Naive thymus-derived CD4-positive, alpha-beta T cell (primary cell): ENCODE measurements at regions of chr11 and their contacts with region 1.

Region 1: GRCh38 chr11:57456960-57457642 is 3.2 kb upstream of the RTN4RL2 start:
- DNase-seq: peak; percentile 41 to 77 (median 62)
- ATAC-seq: peak; percentile 83
- H3K4me3 ChIP-seq: no peak overlapping the region
- H3K4me3 Mint-ChIP-seq: peak overlapping the region; percentile 54 to 99 (median 74)
- H3K27ac ChIP-seq: no peak overlapping the region
- H3K27ac Mint-ChIP-seq: peak overlapping the region in 1 of 9 donors; percentile 83
- H3K4me1 ChIP-seq: peaks cover 26% of the 10 kb centered on the region in 2 donors
- H3K4me1 Mint-ChIP-seq: peaks cover 17 to 33% (median 26%) of the 10 kb centered on the region in 7 donors
- H3K27me3 ChIP-seq: peaks cover 12% of the 10 kb centered on the region in 2 donors
- H3K27me3 Mint-ChIP-seq: peaks cover 22 to 56% (median 32%) of the 10 kb centered on the region in 5 donors

Region 2: DNA sequence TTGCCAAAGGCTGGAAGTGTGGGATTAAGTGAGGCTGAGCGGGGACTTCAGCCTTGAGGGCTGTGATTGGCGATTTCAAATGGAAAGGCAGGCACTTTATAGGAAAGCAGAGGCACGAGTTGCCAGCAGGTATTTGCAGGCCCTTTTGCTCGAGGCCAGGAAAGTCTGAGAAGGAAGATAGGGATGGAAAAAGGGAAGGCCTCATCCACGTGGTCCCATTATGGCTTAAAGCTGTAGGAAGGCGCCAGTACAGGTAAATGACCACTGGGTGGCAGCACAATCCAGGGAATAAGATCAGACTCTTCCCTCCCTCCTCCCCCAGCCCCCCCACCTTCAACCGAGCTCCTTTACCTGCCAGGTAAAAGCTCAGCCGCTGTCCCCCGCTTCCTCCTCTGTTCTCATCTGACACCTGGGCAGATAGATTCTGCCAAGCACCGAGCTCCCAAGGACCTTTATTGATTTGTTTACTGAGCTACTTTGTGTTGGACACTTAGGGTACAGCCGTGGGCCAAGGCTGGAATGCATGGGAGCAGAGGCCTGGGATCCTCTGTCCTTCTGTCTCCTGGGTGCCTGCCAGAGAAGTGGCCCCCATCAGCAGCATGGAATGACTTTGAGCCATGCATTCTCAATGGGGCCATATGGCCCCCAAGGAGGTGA is 111.4 kb before region 1 on chr11:
- CTCF ChIA-PET with region 1: interaction called, 5 read pairs
- POLR2A ChIA-PET with region 1: no interaction called
- intact Hi-C with region 1: loop called in 1 of 2 experiments (anchors 1 kb)
- DNase-seq: peak; percentile 39 to 68 (median 62)
- ATAC-seq: peak; percentile 87
- H3K4me3 ChIP-seq: no peak overlapping the region
- H3K4me3 Mint-ChIP-seq: no peak overlapping the region
- H3K27ac ChIP-seq: no peak overlapping the region
- H3K27ac Mint-ChIP-seq: no peak overlapping the region
- H3K4me1 ChIP-seq: no peaks in the 10 kb centered on the region
- H3K4me1 Mint-ChIP-seq: peaks cover 0 to 10% (median 0%) of the 10 kb centered on the region in 7 donors
- H3K27me3 ChIP-seq: no peaks in the 10 kb centered on the region
- H3K27me3 Mint-ChIP-seq: no peaks in the 10 kb centered on the region

Region 3: GRCh38 chr11:57440744-57441414 is 16.2 kb before region 1 on chr11:
- CTCF ChIA-PET with region 1: interaction called, 11 read pairs
- POLR2A ChIA-PET with region 1: no interaction called
- intact Hi-C with region 1: no loop called
- DNase-seq: no peak
- ATAC-seq: no peak
- H3K4me3 ChIP-seq: no peak overlapping the region
- H3K4me3 Mint-ChIP-seq: no peak overlapping the region
- H3K27ac ChIP-seq: no peak overlapping the region
- H3K27ac Mint-ChIP-seq: no peak overlapping the region
- H3K4me1 ChIP-seq: no peaks in the 10 kb centered on the region
- H3K4me1 Mint-ChIP-seq: no peaks in the 10 kb centered on the region
- H3K27me3 ChIP-seq: no peaks in the 10 kb centered on the region
- H3K27me3 Mint-ChIP-seq: peaks cover 0 to 11% (median 7%) of the 10 kb centered on the region in 5 donors

Region 4: DNA sequence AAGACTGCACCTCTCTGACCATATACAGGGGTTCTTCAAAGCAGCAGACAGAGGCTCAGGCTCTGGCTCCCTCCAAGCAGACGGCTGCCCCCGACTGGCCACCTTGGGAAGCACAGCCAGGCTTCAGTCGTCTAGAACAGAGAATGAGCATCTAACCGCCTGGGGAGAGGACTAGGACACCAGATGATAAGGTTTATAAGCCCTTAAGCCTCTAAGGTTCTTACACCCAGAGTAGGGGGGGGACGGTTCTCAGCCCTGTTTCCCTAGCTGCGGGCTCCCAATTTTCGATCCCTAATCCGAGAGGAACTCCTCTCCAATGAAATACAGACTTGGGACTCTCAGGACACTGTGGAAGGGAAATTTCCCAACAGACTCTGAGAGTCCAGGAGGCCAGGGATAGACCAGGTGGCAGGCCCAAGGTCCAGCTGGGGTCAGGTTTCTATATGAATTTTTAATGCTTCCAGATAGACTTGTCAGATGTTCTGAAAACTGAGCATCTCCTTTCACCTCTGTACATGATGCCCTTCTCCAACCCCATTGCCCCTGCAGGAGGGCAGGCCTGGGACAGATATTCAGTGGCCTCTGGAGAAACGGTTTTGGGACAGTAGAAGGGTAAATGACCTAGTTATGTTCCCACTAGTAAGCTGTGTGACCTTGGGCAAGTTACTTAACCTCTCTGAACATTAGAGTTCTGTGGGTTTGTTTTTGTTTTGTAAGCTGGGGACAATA is 23.5 kb after region 1 on chr11:
- CTCF ChIA-PET with region 1: interaction called, 104 read pairs
- POLR2A ChIA-PET with region 1: interaction called, 4 read pairs
- intact Hi-C with region 1: loop called (anchors 1 kb)
- DNase-seq: peak in 8 of 9 donors; percentile 30 to 75 (median 49)
- ATAC-seq: peak; percentile 58
- H3K4me3 ChIP-seq: no peak overlapping the region
- H3K4me3 Mint-ChIP-seq: peak overlapping the region in 1 of 10 donors; percentile 15
- H3K27ac ChIP-seq: no peak overlapping the region
- H3K27ac Mint-ChIP-seq: peak overlapping the region in 1 of 9 donors; percentile 49
- H3K4me1 ChIP-seq: peaks cover 10 to 19% of the 10 kb centered on the region in 2 donors
- H3K4me1 Mint-ChIP-seq: peaks cover 0 to 28% (median 18%) of the 10 kb centered on the region in 7 donors
- H3K27me3 ChIP-seq: no peaks in the 10 kb centered on the region
- H3K27me3 Mint-ChIP-seq: peaks cover 0 to 67% (median 16%) of the 10 kb centered on the region in 5 donors

Region 5: DNA sequence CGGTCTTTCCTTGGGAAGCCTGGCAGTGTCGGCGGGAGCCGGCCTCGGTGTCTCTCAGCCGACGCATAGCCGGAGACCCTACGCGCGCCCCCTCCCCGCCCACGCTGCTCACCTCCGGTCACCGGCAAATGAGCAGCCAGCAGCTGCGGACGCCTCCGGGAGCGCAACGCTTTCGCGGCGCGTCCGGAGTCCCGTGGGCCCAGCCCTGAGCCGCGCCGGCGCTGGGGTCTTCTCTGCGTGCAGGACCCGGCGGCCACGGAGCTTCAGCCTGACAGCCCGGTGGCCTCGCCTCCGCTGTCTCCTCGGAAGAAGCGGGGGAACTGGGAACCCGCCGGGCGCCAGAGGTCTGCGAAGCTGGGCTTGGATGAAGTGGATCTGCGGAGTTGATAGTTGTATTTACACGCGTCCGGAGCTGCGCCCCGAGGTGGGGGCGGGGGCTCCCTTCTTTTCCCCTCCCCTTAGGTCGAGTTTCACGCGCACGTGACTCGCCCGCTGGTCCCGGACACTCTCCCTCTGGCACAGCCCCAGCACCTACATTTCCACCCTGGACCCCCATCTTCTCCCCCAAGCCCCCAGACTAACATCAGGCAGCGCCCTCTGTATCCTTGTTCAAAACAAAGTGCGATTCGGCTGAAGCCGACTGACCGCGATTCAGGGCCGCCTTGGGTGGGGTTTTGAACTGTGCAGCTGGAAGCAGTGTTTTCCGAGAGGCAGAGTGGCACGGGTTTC is 58.4 kb after region 1 on chr11 and contains the start of gene SLC43A1:
- CTCF ChIA-PET with region 1: interaction called, 4 read pairs
- POLR2A ChIA-PET with region 1: no interaction called
- intact Hi-C with region 1: loop called (anchors 2 to 5 kb)
- DNase-seq: peak in 2 of 9 donors; percentile 17 to 54
- ATAC-seq: peak; percentile 33
- H3K4me3 ChIP-seq: peak within 1 kb of the TSS; percentile 63
- H3K4me3 Mint-ChIP-seq: peak within 1 kb of the TSS; percentile 95 to 99 (median 98)
- H3K27ac ChIP-seq: peak within 1 kb of the TSS; percentile 63
- H3K27ac Mint-ChIP-seq: peak within 1 kb of the TSS; percentile 69 to 93 (median 78)
- H3K4me1 ChIP-seq: peaks cover 5 to 7% of the 10 kb centered on the region in 2 donors
- H3K4me1 Mint-ChIP-seq: peaks cover 19 to 31% (median 29%) of the 10 kb centered on the region in 7 donors
- H3K27me3 ChIP-seq: no peaks in the 10 kb centered on the region
- H3K27me3 Mint-ChIP-seq: peaks cover 0 to 10% (median 0%) of the 10 kb centered on the region in 5 donors
- total RNA-seq, gene SLC43A1: 10.1 to 19.2 (median 16.3) TPM

Region 6: DNA sequence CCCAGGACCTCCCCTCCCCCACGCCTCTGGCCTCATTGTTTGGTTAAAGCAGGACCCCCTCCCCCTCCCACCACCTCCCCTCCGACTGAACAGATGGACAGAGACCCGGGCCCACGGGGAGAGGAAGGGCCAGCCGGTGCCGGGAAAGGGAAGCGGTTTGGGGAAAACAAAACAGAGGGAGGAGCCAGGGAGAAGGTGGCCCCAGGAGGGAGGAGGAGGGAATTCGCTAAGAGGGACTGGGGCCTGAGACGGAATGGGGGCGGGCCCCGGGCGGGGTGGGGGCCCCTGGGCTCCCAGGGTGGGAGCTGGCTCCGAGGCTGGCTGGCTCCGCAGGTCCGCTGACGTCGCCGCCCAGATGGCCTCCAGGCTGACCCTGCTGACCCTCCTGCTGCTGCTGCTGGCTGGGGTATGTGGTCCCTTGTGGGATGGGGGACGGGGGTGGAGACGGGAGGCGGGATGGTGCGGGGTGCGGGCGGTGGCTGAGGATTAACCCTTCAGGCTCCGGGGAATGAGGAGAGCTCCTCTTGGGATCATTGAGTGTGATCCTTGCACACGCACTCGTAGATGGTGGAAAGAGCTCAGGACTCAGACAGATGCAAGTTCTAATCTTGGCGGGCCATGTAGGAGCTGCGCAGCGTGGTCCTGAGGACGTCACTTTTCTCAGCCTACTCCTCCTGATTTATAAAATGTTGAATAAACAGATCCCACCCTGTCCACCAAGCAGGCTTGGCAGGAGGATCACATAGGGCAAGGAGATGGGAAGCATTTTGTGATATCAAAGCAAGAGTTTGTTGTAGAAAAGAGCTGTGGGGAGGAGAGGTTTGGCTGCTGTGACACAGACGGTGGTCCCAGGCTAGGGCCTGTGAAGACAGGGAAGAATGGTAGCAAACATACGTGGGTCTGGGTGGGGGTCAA is 141.1 kb after region 1 on chr11:
- CTCF ChIA-PET with region 1: no interaction called
- POLR2A ChIA-PET with region 1: no interaction called
- intact Hi-C with region 1: no loop called
- DNase-seq: no peak
- ATAC-seq: no peak
- H3K4me3 ChIP-seq: no peak overlapping the region
- H3K4me3 Mint-ChIP-seq: peak overlapping the region in 2 of 10 donors; percentile 29 to 35
- H3K27ac ChIP-seq: no peak overlapping the region
- H3K27ac Mint-ChIP-seq: peak overlapping the region in 1 of 9 donors; percentile 6
- H3K4me1 ChIP-seq: no peaks in the 10 kb centered on the region
- H3K4me1 Mint-ChIP-seq: peaks cover 0 to 9% (median 0%) of the 10 kb centered on the region in 7 donors
- H3K27me3 ChIP-seq: no peaks in the 10 kb centered on the region
- H3K27me3 Mint-ChIP-seq: peaks cover 27 to 48% (median 34%) of the 10 kb centered on the region in 5 donors

Region 7: DNA sequence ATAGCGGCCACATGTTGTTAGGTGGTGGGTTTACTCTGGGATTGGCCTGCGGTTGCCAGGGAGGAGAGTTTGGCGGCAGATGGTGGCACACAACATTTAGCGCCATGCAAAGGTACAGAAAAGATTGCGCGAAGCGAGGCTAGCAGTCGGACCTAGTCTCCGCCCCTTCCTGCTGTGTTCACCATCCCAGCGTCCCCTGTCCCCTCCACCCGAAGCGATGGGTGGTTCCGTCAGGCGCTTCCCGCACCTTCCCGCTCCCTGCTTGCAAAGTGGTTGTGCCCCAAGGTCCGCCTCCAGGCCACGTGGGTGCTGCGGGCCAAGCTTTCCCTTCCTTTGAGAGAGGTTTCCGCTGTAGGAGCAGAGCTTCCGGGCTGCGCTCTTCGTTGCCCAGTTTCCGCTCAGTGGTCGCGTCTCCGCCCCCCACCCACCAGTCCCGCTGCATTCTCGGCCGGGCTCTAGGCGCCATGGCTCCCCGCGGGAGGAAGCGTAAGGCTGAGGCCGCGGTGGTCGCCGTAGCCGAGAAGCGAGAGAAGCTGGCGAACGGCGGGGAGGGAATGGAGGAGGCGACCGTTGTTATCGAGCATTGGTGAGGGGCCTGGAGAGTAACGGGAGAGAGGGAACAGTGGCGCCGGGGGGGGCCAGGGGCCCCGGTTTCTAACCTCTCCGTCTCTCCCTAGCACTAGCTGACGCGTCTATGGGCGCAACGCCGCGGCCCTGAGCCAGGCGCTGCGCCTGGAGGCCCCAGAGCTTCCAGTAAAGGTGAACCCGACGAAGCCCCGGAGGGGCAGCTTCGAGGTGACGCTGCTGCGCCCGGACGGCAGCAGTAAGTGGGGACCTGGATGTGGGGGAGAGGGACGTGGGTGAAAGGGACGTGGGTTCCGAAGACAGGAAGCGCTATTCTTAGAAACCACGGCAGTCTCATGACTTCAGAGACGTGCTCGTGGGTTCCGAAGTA is 284.3 kb after region 1 on chr11 and contains the start of gene SELENOH:
- CTCF ChIA-PET with region 1: no interaction called
- POLR2A ChIA-PET with region 1: no interaction called
- intact Hi-C with region 1: no loop called
- DNase-seq: peak; percentile 75 to 96 (median 91)
- ATAC-seq: peak; percentile 94
- H3K4me3 ChIP-seq: peak within 1 kb of the TSS; percentile 86
- H3K4me3 Mint-ChIP-seq: peak within 1 kb of the TSS; percentile 90 to 100 (median 99)
- H3K27ac ChIP-seq: peak within 1 kb of the TSS; percentile 93
- H3K27ac Mint-ChIP-seq: peak within 1 kb of the TSS; percentile 97 to 100 (median 98)
- H3K4me1 ChIP-seq: peaks cover 16 to 23% of the 10 kb centered on the region in 2 donors
- H3K4me1 Mint-ChIP-seq: peaks cover 12 to 50% (median 41%) of the 10 kb centered on the region in 7 donors
- H3K27me3 ChIP-seq: no peaks in the 10 kb centered on the region
- H3K27me3 Mint-ChIP-seq: no peaks in the 10 kb centered on the region
- total RNA-seq, gene SELENOH: 93.6 to 193 (median 124) TPM

Region 8: GRCh38 chr11:57800444-57801182 is 343.5 kb after region 1 on chr11:
- CTCF ChIA-PET with region 1: no interaction called
- POLR2A ChIA-PET with region 1: no interaction called
- intact Hi-C with region 1: loop called in 1 of 2 experiments (anchors 1 kb)
- DNase-seq: peak in 7 of 9 donors; percentile 46 to 70 (median 64)
- ATAC-seq: peak; percentile 93
- H3K4me3 ChIP-seq: no peak overlapping the region
- H3K4me3 Mint-ChIP-seq: peak overlapping the region in 6 of 10 donors; percentile 33 to 57 (median 54)
- H3K27ac ChIP-seq: peak overlapping the region; percentile 39
- H3K27ac Mint-ChIP-seq: peak overlapping the region; percentile 42 to 92 (median 80)
- H3K4me1 ChIP-seq: peaks cover 8 to 10% of the 10 kb centered on the region in 2 donors
- H3K4me1 Mint-ChIP-seq: peaks cover 22 to 40% (median 30%) of the 10 kb centered on the region in 7 donors
- H3K27me3 ChIP-seq: no peaks in the 10 kb centered on the region
- H3K27me3 Mint-ChIP-seq: no peaks in the 10 kb centered on the region

Region 9: GRCh38 chr11:58788355-58789023 is 1331.4 kb after region 1 on chr11:
- CTCF ChIA-PET with region 1: no interaction called
- POLR2A ChIA-PET with region 1: no interaction called
- intact Hi-C with region 1: loop called in 1 of 2 experiments (anchors 5 kb)
- DNase-seq: peak in 8 of 9 donors; percentile 27 to 79 (median 74)
- ATAC-seq: peak; percentile 93
- H3K4me3 ChIP-seq: no peak overlapping the region
- H3K4me3 Mint-ChIP-seq: no peak overlapping the region
- H3K27ac ChIP-seq: no peak overlapping the region
- H3K27ac Mint-ChIP-seq: peak overlapping the region in 1 of 9 donors; percentile 77
- H3K4me1 ChIP-seq: no peaks in the 10 kb centered on the region
- H3K4me1 Mint-ChIP-seq: peaks cover 0 to 4% (median 0%) of the 10 kb centered on the region in 7 donors
- H3K27me3 ChIP-seq: no peaks in the 10 kb centered on the region
- H3K27me3 Mint-ChIP-seq: peaks cover 1 to 21% (median 6%) of the 10 kb centered on the region in 5 donors